ENCODE measurements at regions of chr19 and their contacts with region 1.

Region 1: GRCh38 chr19:55156202-55157063 is 1.1 kb downstream of the TNNI3 start:
- DNase-seq: peak; percentile 77 to 91 (median 83)
- H3K4me3 ChIP-seq: no peak overlapping the region
- H3K27ac ChIP-seq: no peak overlapping the region
- H3K4me1 ChIP-seq: no peaks in the 10 kb centered on the region
- H3K27me3 ChIP-seq: peaks cover 2% of the 10 kb centered on the region
- CTCF ChIP-seq: no peak

Region 2: DNA sequence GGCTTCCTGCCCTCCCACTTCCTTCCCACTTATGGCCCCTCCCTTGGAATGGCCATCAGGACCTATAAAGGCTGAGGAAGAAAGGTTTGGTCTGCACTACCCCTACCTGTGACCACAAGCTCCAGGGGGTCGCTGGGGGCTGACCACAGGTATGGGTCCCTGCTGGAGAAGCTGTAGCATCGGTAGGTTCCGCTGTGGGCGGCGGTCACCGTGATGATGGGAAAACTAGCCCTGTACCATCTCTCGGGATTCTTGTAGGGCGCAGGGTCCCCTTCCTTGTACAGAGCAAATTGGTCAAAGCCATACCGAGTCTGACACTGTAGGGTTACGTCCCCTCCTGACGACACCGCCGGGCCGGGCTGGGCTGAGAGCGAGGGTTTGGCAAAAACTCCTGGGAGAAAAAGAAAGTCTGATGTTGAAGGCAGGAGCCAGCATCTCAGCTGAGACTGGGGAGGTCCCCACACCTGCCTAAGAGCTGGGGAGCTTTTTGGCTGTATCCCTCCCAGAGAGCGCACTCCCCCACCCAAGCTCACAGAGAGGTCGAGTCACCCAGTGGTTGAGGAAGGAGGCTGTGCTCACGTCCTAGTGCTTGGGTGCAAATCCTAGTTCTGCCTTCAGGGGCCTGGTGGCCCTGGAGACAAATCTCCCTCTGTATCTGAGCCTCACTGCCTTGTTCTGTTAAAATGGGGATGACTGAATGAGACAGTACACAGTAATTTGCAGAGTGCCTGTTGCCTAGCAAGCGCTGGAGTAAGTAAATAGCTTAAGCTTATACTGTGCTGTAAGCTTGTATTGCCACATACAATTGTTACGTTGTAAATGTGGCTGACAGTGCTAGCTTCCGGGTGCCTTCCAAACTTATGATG is 128.7 kb before region 1 on chr19:
- intact Hi-C with region 1: no loop called
- DNase-seq: no peak
- H3K4me3 ChIP-seq: no peak overlapping the region
- H3K27ac ChIP-seq: no peak overlapping the region
- H3K4me1 ChIP-seq: no peaks in the 10 kb centered on the region
- H3K27me3 ChIP-seq: no peaks in the 10 kb centered on the region
- CTCF ChIP-seq: no peak

Region 3: GRCh38 chr19:55241143-55242088 is 85.0 kb after region 1 on chr19:
- intact Hi-C with region 1: no loop called
- DNase-seq: peak in 1 of 5 donors; percentile 76
- H3K4me3 ChIP-seq: no peak overlapping the region
- H3K27ac ChIP-seq: no peak overlapping the region
- H3K4me1 ChIP-seq: no peaks in the 10 kb centered on the region
- H3K27me3 ChIP-seq: no peaks in the 10 kb centered on the region
- CTCF ChIP-seq: no peak

Region 4: DNA sequence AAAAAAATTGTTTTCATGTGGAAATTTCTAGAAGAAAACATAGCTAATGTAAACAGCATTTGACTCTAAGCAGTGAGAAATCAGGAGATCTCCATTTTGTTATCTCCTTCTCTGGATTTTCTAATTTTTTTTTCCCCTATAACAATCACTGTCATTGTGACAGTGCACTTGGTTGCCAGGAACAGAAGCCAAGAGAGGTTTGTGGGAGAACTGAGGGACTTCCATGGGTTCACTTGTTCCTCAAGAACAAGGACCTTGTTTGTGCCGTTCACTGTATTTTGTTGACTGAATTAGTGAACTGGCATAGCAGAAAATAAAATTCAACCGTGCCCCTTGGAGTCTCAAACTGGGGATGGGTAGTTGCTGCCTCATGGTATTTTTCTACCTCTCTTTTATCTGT is 269.6 kb after region 1 on chr19:
- intact Hi-C with region 1: loop called (anchors 10 kb)
- DNase-seq: no peak
- H3K4me3 ChIP-seq: no peak overlapping the region
- H3K27ac ChIP-seq: no peak overlapping the region
- H3K4me1 ChIP-seq: no peaks in the 10 kb centered on the region
- H3K27me3 ChIP-seq: no peaks in the 10 kb centered on the region
- CTCF ChIP-seq: no peak